ENCODE measurements at regions of chr11 and their contacts with region 1.

Region 1: DNA sequence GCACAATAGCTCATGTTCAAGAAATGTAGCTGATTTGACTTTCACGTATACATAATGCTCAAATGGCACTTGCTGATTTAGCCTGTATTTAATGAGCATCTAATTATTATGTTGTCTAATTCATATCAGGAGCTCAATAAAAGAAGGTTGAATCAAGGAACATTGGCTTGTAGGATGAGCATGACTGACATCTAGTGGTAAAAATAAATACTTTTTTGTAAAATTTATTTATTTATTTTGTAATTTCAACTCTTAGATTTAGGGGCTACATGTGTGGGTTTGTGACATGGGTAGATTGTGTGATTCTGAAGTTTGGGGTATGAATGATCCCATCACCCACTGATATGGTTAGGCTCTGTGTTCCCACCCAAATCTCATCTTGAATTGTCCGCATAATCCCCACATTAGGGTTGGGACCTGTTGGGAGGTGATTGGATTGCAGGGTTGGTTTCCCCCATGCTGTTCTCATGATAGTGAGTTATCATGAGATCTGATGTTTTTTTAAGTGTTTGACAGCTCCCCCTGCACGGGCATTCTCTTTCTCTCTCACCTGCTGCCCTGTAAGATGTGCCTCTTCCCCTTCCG is 1.7 kb upstream of the OR52E5 start:
- DNase-seq: peak in 1 of 2 donors; percentile 19
- ATAC-seq: no peak
- H3K4me3 ChIP-seq: no peak overlapping the region
- H3K4me3 Mint-ChIP-seq: no peak overlapping the region
- H3K27ac ChIP-seq: no peak overlapping the region
- H3K27ac Mint-ChIP-seq: no peak overlapping the region
- H3K4me1 ChIP-seq: no peaks in the 10 kb centered on the region
- H3K4me1 Mint-ChIP-seq: no peaks in the 10 kb centered on the region
- H3K27me3 ChIP-seq: no peaks in the 10 kb centered on the region
- H3K27me3 Mint-ChIP-seq: peaks cover 6 to 18% of the 10 kb centered on the region in 2 donors
- CTCF ChIP-seq: peak; percentile 31

Region 2: GRCh38 chr11:5123802-5124521 is 767.3 kb before region 1 on chr11:
- intact Hi-C with region 1: loop called (anchors 10 kb)
- DNase-seq: peak in 1 of 2 donors; percentile 64
- ATAC-seq: peak; percentile 54 to 65 (median 59)
- H3K4me3 ChIP-seq: no peak overlapping the region
- H3K4me3 Mint-ChIP-seq: no peak overlapping the region
- H3K27ac ChIP-seq: no peak overlapping the region
- H3K27ac Mint-ChIP-seq: no peak overlapping the region
- H3K4me1 ChIP-seq: no peaks in the 10 kb centered on the region
- H3K4me1 Mint-ChIP-seq: peaks cover 0 to 5% of the 10 kb centered on the region in 2 donors
- H3K27me3 ChIP-seq: no peaks in the 10 kb centered on the region
- H3K27me3 Mint-ChIP-seq: peaks cover 3 to 18% of the 10 kb centered on the region in 2 donors
- CTCF ChIP-seq: peak; percentile 66